ENCODE measurements at regions of chr5 and their contacts with region 1.

Region 1: DNA sequence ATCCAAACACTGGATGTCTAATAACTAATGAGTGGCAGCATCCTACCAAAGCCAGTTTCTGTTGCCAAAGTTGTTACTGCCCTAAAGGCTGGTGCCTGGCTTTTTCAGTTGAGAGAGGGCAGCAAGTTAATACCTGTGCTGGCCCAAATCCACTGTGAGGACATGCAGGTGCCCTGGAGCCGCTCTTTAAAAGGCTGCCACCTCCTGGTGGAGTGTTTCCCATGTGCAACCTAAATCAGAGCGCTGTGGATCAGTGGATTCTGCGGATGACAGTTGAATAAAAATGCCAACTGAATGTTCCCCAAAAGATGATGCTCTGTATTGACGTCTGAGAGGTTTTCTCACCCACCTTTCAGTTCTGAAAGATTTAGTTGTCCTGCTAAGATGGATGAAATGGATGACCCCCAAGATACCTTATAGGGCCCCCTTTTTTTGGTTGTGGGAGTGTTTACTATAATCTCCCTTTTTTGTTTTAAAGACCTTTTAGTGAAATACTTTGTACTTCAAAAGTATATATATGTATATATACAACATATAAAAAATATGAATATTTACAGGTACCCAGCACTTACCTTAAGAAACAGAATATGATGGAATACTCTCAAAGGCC is 146.4 kb downstream of the EGFLAM start:
- DNase-seq: no peak
- ATAC-seq: no peak
- H3K4me3 ChIP-seq: no peak overlapping the region
- H3K27ac ChIP-seq: no peak overlapping the region
- H3K4me1 ChIP-seq: peaks cover 0 to 5% (median 0%) of the 10 kb centered on the region in 9 donors
- H3K27me3 ChIP-seq: peaks cover 0 to 47% (median 17%) of the 10 kb centered on the region in 7 donors
- CTCF ChIP-seq: peak in 5 of 9 donors; percentile 3 to 36 (median 20)

Region 2: GRCh38 chr5:38208782-38209378 is 195.9 kb before region 1 on chr5:
- intact Hi-C with region 1: loop called in 2 of 10 experiments (anchors 10 kb)
- DNase-seq: peak in 1 of 2 donors; percentile 22
- ATAC-seq: peak in 1 of 8 donors; percentile 57
- H3K4me3 ChIP-seq: no peak overlapping the region
- H3K27ac ChIP-seq: no peak overlapping the region
- H3K4me1 ChIP-seq: no peaks in the 10 kb centered on the region
- H3K27me3 ChIP-seq: peaks cover 0 to 25% (median 12%) of the 10 kb centered on the region in 7 donors
- CTCF ChIP-seq: peak in 8 of 9 donors; percentile 23 to 65 (median 52)